Posterior vena cava (tissue), 2 donors: ENCODE measurements at regions of chr10 and their contacts with region 1.

Region 1: GRCh38 chr10:115801992-115802391 is 471.0 kb downstream of the GFRA1 start:
- DNase-seq: no peak

Region 2: DNA sequence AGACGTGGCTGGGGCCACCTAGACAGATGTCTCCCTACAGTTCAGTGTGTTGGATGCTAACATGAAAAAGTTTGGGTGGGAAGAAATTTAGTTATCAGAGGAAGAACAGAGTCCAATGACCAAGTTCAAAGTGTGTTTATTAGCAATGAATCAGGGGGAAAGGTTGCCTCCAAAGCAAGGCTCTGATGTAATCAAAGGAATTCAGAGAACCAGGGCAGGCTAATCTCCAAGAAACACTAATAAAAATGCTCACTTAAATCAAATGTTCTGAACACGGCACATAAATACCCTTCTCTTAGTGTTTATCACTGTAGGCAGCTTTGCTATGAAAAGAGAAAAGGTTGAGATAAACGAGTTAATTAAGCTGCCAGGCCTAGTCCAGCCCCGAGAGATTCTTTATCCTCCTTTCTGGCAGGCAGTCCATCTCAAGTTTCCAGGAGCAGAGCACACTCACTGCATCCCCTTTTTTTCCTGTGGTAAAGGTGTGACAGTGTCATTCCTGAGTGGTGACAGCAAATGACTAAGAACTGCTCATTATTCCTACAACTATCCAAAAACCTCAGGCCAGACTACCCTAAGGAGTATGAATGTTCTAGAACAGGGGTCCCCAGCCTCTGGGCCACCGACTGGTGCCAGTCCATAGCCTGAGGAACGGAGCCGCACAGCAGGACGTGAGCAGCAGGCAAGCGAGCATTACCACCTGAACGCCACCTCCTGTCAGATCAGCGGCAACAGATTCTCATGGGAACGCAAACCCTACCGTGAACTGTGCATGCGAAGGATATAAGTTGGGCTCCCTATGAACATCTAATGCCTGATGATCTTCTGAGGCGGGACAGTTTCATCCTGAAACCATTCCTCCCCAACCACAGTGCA is 1047.3 kb before region 1 on chr10:
- intact Hi-C with region 1: loop called in 1 of 2 experiments (anchors 5 kb)
- DNase-seq: no peak

Region 3: GRCh38 chr10:115720121-115720520 is 81.9 kb before region 1 on chr10:
- intact Hi-C with region 1: no loop called
- DNase-seq: no peak

Region 4: GRCh38 chr10:115762029-115762428 is 40.0 kb before region 1 on chr10:
- intact Hi-C with region 1: no loop called
- DNase-seq: no peak

Region 5: DNA sequence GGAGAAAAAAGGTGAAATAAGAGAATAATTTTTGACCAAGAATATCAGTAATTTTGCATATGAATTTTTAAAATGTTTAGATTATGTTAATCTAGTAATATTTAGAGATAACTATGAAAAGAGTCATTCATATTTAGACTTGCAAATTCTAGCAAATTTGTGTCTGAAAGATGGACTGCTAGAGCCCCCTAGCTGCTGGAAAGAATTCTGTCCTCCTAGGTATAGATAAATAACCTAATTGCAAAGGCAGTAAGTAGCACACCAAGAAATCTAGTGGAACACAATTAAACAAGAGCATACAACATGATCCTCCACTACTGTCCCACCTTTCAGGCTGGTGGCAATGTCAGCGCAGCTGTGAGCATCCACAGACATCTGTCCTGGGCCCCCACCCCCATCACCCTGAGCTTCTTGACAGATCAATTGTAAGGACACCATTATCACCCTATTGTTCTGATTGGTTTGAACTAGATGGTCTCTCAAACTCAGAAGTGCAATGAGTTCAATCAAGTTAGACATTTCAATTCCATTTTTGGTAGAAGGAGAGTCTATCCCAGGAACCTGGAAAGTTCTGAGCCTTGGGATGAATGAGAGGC is 486.0 kb after region 1 on chr10:
- intact Hi-C with region 1: loop called in 1 of 2 experiments (anchors 10 kb)
- DNase-seq: no peak